ENCODE measurements at regions of chr17 and their contacts with region 1.

Region 1: GRCh38 chr17:36601303-36602029 is at the start of gene MRM1:
- DNase-seq: peak; percentile 92
- H3K4me3 Mint-ChIP-seq: peak within 1 kb of the TSS; percentile 93
- H3K27ac Mint-ChIP-seq: peak within 1 kb of the TSS; percentile 85
- H3K4me1 Mint-ChIP-seq: peaks cover 24% of the 10 kb centered on the region
- H3K27me3 Mint-ChIP-seq: no peaks in the 10 kb centered on the region
- CTCF ChIP-seq: no peak
- total RNA-seq, gene MRM1: 5.7 and 10.0 TPM in 2 replicates

Region 2: DNA sequence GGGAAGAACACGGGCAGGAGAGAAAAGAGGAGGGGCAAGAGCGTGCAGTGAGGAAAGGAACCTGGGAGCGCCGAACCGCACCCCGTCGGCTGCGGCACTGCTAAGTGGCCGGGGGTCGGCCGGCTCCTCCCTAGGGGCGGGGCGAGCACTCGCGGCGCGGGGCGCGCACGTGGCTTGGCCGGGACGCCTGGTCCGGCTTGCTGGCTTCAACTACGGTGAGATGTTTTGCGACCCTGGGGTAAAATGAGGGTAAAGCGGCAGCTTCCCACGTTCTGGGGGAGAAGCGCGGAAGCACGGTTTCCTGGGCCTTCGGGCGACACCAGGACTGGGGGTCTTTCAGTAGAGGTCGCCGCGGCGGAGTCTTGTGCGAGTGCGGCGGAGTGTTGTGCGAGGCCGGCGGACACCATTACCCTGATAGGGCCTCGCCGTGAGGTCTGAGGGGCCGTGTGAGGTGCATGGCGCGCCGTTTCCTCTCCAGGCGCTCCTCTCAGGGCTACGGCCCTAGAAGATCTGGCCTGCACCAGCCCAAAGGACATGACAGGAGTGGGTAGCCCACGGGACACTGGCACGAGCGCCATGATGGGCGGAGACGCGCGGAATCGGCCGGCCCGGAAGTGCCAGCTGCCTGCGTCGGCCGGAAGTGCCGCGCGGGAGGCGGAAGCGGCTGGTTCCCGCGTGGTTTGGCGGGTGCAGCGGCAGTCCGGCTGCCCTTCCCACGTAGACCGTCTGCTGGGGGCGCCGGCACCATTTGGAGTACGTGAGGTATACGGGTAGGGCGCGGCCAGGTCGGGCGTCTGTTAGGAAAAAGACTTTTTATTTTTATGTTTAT is 66.4 kb before region 1 on chr17 and contains the starts of genes MYO19 and PIGW:
- CTCF ChIA-PET with region 1: interaction called, 5 read pairs
- POLR2A ChIA-PET with region 1: interaction called, 41 read pairs
- intact Hi-C with region 1: no loop called
- DNase-seq: peak; percentile 93
- H3K4me3 Mint-ChIP-seq: peak within 1 kb of the TSS; percentile 96
- H3K27ac Mint-ChIP-seq: peak within 1 kb of the TSS; percentile 99
- H3K4me1 Mint-ChIP-seq: peaks cover 7% of the 10 kb centered on the region
- H3K27me3 Mint-ChIP-seq: no peaks in the 10 kb centered on the region
- CTCF ChIP-seq: no peak
- total RNA-seq, gene MYO19: 64.7 and 72.2 TPM in 2 replicates
- total RNA-seq, gene PIGW: 7.5 and 9.8 TPM in 2 replicates

Region 3: DNA sequence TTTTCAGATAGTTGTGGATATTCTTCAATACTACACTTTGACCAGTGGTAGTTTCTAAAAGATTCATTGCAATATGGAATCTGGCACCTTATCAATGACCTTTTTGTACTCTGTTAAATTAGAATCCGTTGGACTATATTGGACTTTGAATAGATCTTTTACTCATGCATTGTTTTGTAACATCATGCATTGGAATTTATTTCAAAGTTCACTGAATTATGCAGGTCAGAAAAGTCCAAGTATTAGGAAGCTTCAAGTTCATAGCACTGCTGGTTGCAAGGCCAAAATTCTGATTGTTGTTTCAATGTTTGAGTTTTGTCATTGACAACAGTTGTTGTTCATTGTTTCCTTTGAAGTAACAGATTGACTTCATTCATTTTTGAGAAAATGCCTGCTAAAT is 17.7 kb before region 1 on chr17:
- CTCF ChIA-PET with region 1: interaction called, 10 read pairs
- POLR2A ChIA-PET with region 1: interaction called, 60 read pairs
- intact Hi-C with region 1: no loop called
- DNase-seq: no peak
- H3K4me3 Mint-ChIP-seq: no peak overlapping the region
- H3K27ac Mint-ChIP-seq: no peak overlapping the region
- H3K4me1 Mint-ChIP-seq: no peaks in the 10 kb centered on the region
- H3K27me3 Mint-ChIP-seq: no peaks in the 10 kb centered on the region
- CTCF ChIP-seq: no peak

Region 4: GRCh38 chr17:36629252-36629847 is 27.9 kb after region 1 on chr17:
- CTCF ChIA-PET with region 1: interaction called, 16 read pairs
- POLR2A ChIA-PET with region 1: no interaction called
- intact Hi-C with region 1: loop called (anchors 1 kb)
- DNase-seq: peak; percentile 70
- H3K4me3 Mint-ChIP-seq: no peak overlapping the region
- H3K27ac Mint-ChIP-seq: no peak overlapping the region
- H3K4me1 Mint-ChIP-seq: no peaks in the 10 kb centered on the region
- H3K27me3 Mint-ChIP-seq: peaks cover 34% of the 10 kb centered on the region
- CTCF ChIP-seq: peak; percentile 99

Region 5: DNA sequence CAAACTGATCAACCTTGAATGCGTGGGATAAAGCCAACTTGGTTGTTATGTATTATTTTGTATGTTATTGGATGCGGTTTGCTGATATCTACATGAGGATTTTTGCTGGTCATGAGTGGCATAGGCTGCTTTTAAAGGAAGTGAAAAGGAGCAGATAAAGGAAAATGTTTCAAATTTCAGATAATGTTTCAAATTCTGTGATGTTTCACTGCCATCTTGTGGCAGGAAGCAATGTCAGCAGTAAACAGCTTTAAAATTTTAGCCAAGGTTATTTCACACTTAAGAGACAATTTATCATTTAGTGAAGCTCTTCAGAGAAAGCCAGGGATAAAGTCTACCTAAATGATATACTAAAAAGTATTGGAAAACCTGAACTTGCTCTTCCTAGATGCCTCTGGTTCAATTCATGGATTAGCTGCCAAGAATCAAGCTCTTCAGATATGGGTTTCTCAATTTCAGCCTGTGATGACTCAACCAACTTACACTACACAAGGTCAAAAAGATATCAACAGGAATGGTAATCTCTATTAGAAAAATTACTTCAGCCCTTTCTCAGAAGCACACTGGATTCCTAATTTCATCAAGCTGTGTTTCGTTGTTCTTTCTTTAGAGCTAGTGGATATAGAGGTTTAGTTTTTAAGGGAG is 638.3 kb after region 1 on chr17:
- CTCF ChIA-PET with region 1: interaction called, 7 read pairs
- POLR2A ChIA-PET with region 1: interaction called, 5 read pairs
- intact Hi-C with region 1: loop called (anchors 5 kb)
- DNase-seq: peak; percentile 46
- H3K4me3 Mint-ChIP-seq: no peak overlapping the region
- H3K27ac Mint-ChIP-seq: no peak overlapping the region
- H3K4me1 Mint-ChIP-seq: peaks cover 10% of the 10 kb centered on the region
- H3K27me3 Mint-ChIP-seq: no peaks in the 10 kb centered on the region
- CTCF ChIP-seq: peak; percentile 55

Measured in MCF 10A (cell line).